ENCODE measurements at regions of chr12 and their contacts with region 1.

Region 1: DNA sequence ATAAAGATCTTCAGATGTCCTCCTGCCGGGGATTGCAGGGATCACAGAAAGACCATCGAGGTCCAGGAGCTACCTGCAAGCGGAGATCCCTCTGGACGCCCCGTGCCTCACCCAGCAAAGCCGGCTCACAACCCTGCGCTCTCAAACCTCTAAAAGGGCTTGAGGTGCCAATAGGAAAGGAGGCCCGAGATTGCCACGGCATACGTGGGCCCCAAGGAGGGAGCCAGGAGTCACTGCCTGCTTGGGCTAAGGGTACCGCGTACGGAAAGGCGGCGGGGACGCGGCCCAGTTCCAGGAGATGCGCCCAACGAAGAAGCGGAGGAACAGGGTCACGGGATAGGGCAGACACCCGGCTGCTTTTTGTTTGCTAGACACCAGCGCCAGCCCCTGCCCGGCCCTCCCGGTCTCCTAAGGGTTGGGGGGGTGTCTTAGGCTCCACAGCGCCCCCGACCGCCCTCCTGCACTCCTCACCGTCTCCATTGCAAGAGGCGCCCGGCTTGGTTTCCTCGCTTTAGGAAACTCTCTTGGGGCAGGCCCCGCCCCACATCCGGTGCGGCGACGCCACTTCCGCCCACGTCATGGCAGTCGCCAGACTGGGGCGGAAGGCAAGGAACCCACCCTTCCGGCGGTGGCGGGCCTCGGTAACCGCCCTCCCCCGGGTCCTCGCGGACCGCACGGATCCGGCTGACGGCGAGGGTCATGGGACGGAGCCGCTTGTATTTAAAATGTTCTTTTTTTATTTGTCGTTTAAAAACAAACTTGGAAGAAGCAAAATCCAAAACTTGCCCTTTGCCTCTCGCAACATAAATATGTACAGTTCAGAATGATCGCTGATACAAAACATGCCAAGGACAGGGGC is at the start of gene PRKAG1:
- DNase-seq: peak; percentile 97
- ATAC-seq: peak; percentile 87
- H3K4me3 Mint-ChIP-seq: peak within 1 kb of the TSS; percentile 81
- H3K27ac Mint-ChIP-seq: peak within 1 kb of the TSS; percentile 97
- H3K4me1 Mint-ChIP-seq: peaks cover 34% of the 10 kb centered on the region
- H3K27me3 Mint-ChIP-seq: no peaks in the 10 kb centered on the region
- total RNA-seq, gene PRKAG1: 54.5 to 62.6 TPM

Region 2: DNA sequence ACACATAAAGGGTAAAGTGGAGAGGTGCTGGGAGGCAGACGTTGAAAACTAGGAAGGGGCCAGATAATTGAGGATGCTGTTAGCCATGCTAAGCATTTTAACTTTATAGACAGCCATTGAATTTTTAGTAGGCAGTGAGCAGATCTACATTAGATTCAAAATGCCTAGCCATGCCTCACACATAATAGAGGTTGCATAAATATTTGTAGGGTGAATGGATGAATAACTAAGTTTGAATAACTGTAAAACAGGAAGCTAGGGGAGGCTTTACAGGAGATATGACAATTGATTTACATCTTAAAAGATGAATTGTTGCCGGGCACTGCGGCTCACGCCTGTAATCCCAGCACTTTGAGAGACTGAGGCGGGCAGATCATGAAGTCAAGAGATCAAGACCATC is 289.7 kb before region 1 on chr12:
- CTCF ChIA-PET with region 1: no interaction called
- POLR2A ChIA-PET with region 1: no interaction called
- intact Hi-C with region 1: no loop called
- DNase-seq: no peak
- ATAC-seq: no peak
- H3K4me3 Mint-ChIP-seq: no peak overlapping the region
- H3K27ac Mint-ChIP-seq: no peak overlapping the region
- H3K4me1 Mint-ChIP-seq: no peaks in the 10 kb centered on the region
- H3K27me3 Mint-ChIP-seq: peaks cover 3% of the 10 kb centered on the region

Region 3: GRCh38 chr12:48814262-48815125 is 204.0 kb before region 1 on chr12:
- CTCF ChIA-PET with region 1: no interaction called
- POLR2A ChIA-PET with region 1: no interaction called
- intact Hi-C with region 1: loop called in 1 of 2 experiments (anchors 2 kb)
- DNase-seq: peak; percentile 90
- ATAC-seq: peak; percentile 77
- H3K4me3 Mint-ChIP-seq: peak overlapping the region; percentile 81
- H3K27ac Mint-ChIP-seq: no peak overlapping the region
- H3K4me1 Mint-ChIP-seq: peaks cover 23% of the 10 kb centered on the region
- H3K27me3 Mint-ChIP-seq: peaks cover 12% of the 10 kb centered on the region

Region 4: DNA sequence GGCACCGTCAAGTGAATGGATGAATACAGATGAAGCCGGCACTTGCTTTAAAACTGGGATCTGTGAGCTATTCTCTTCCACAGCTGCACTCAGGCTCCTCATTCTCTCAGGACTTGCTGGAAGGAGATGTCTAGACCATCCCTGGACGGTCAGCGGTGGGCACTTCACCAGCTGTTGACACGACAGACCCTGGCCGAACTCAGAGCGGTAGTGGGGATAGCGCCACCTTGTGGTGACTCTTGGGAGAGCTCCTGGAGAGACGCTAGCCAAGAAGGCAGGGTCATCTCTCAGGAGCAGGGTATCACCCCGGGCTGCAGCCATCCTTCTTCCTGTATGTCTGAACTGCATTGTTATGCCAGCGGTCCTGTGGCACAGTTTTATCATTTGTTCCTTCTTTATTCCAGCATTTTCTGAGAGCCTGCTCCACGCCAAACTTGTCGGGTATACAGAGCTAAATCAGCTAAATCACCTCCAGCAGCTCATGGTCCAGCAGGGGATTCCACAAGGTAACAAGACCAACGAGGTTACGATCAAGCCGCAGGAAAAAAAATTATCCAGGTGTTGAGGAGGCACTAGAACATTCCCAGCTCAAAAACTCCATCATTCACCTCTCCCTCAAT is 30.4 kb before region 1 on chr12:
- CTCF ChIA-PET with region 1: interaction called, 13 read pairs
- POLR2A ChIA-PET with region 1: interaction called, 5 read pairs
- intact Hi-C with region 1: no loop called
- DNase-seq: peak; percentile 89
- ATAC-seq: peak; percentile 85
- H3K4me3 Mint-ChIP-seq: no peak overlapping the region
- H3K27ac Mint-ChIP-seq: no peak overlapping the region
- H3K4me1 Mint-ChIP-seq: no peaks in the 10 kb centered on the region
- H3K27me3 Mint-ChIP-seq: peaks cover 41% of the 10 kb centered on the region

Region 5: DNA sequence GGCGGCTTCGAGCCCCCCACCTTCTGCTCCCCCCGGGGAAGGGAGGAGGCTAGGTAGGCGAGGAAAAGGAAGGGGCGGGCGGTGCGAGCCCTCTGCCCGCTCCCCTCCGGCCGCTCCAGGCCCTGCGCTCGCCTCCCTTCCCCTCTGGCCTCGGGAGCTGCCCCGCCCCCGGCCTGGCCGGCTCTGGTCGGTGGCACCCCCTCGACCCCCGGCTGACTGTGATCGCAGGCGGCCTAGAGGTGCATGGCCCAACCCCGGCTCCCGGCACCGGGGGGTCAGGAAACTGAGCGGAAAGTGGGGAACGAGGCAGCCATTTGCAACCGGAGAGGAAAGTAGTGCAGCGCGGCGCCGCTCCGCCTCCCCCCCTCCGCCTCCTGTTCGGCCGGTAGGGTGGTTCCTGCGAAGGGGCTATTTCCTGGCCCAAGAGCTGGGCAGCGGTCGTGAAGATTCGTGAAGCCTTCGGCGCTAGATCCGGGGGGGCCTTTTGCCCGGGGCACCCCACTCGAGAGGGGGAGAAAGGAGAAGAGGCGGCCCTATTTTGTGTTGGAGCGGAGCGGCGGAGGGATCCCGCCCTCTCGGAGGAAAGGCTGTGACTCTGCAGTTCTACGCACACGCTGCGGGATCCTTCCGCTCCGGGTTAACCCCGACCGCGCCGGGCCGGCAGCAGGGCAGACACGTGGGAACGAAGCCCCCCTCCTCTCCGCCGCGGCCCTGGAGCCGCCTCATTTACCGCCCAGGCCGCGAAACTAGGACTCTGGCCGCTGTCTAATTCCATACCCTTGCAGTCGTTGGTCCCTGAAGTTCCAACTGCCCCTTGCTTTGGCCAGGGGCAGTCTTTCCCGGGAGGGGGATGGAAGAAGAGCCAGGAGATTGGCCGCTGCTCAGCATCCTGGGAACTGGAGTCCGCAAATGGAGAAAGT is 42.0 kb after region 1 on chr12 and contains the start of gene KMT2D:
- CTCF ChIA-PET with region 1: interaction called, 4 read pairs
- POLR2A ChIA-PET with region 1: no interaction called
- intact Hi-C with region 1: loop called (anchors 1 to 5 kb)
- DNase-seq: peak; percentile 94
- ATAC-seq: peak; percentile 75
- H3K4me3 Mint-ChIP-seq: peak within 1 kb of the TSS; percentile 98
- H3K27ac Mint-ChIP-seq: peak within 1 kb of the TSS; percentile 95
- H3K4me1 Mint-ChIP-seq: peaks cover 45% of the 10 kb centered on the region
- H3K27me3 Mint-ChIP-seq: no peaks in the 10 kb centered on the region
- total RNA-seq, gene KMT2D: 48.3 to 58.2 TPM

Region 6: GRCh38 chr12:49188914-49189367 is 170.5 kb after region 1 on chr12 and contains the start of gene TUBA1A:
- CTCF ChIA-PET with region 1: no interaction called
- POLR2A ChIA-PET with region 1: no interaction called
- intact Hi-C with region 1: loop called in 1 of 2 experiments (anchors 1 kb)
- DNase-seq: peak; percentile 97
- ATAC-seq: peak; percentile 95
- H3K4me3 Mint-ChIP-seq: peak within 1 kb of the TSS; percentile 92
- H3K27ac Mint-ChIP-seq: peak within 1 kb of the TSS; percentile 92
- H3K4me1 Mint-ChIP-seq: peaks cover 24% of the 10 kb centered on the region
- H3K27me3 Mint-ChIP-seq: no peaks in the 10 kb centered on the region
- total RNA-seq, gene TUBA1A: 75.7 to 98.5 TPM

Region 7: GRCh38 chr12:49567611-49568441 is 549.3 kb after region 1 on chr12 and contains the start of gene MCRS1:
- CTCF ChIA-PET with region 1: interaction called, 3 read pairs
- POLR2A ChIA-PET with region 1: no interaction called
- intact Hi-C with region 1: loop called in 1 of 2 experiments (anchors 1 kb)
- DNase-seq: peak; percentile 93
- ATAC-seq: peak; percentile 88
- H3K4me3 Mint-ChIP-seq: peak within 1 kb of the TSS; percentile 90
- H3K27ac Mint-ChIP-seq: peak within 1 kb of the TSS; percentile 95
- H3K4me1 Mint-ChIP-seq: peaks cover 37% of the 10 kb centered on the region
- H3K27me3 Mint-ChIP-seq: no peaks in the 10 kb centered on the region
- total RNA-seq, gene MCRS1: 48.2 to 58.2 TPM

Measured in activated CD4-positive, alpha-beta T cell treated with anti-CD3 and anti-CD28 coated beads for 36 hours (primary cell).